AG04450 (cell line): ENCODE measurements at regions of chr17 and their contacts with region 1.

Region 1: DNA sequence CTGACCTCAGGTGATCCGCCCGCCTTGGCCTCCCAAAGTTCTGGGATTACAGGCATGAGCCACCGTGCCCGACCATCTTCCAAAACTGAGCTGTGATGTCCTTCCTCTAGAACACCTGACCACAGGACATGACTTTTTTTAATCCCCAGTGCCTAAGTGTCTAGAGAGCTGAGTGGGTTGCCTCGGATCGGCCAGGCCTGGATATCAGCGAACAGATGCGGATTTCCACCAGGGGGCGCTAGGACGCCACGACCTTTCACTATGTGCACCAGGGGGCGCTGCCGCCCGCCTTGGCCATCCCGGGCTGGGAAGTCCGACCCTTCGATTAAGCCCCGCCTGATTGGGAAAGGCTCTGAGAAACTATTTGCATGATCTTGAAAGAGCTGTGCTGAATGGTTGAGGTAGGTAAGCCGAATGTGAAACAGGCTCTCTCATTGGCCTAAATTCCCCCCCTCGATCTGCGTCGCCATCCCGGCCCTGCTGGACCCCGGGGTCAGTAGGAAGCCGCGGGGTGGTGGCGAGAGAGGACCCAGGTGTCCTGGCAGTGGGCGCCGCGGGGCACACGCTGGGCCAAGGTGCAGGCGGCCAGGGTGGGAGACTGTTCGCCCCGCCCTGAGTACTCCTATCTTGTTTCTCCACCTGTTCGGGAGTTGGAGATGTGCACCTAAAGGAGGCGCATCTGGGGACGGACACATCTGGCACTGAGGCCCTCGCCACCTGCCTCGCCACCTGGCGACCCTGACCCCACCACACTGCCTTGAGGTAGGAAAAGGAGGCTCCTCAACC is at the start of gene ACBD4:
- DNase-seq: peak; percentile 95
- H3K4me3 ChIP-seq: peak within 1 kb of the TSS; percentile 76
- H3K27ac ChIP-seq: peak within 1 kb of the TSS; percentile 31
- H3K27me3 ChIP-seq: no peaks in the 10 kb centered on the region
- CTCF ChIP-seq: peak; percentile 100
- polyA plus RNA-seq, gene ACBD4: 4.0 and 4.7 TPM in 2 replicates

Region 2: DNA sequence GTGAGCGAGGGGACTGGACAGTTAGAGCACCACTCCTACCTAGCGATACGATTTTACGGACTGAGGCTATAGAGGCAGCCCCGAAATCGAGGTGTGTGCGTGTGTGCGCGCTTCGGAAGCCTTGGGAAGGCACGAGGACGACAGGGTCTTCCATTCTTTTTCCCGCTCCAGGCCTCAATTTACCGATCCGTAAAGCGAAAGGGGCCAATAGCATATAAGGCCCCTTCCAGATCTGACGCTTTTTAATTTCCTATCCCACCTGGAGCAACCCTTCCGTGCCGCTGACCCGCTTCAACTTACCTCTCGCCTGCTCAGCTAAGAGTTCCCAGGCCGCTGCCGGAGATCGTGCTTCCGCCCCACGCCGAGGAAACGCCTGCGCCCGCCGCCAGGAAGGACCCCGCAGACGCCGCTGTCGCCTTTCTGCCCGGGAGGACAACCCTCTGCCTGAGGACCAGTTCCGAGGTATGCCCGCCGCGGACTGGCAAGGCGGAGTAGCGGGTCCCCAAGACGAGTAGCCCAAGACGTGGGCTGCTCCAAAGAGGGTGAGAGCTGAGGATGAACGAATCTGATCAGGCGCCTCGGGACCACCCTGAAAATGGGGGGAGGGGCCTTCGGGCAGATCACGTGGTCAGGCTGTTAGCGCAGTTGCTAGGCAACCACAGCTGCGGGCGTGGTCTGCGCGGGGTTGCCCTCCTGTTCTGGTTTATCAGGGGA is 236.2 kb before region 1 on chr17 and contains the start of gene EFTUD2:
- CTCF ChIA-PET with region 1: interaction called, 19 read pairs
- POLR2A ChIA-PET with region 1: no interaction called
- DNase-seq: peak; percentile 74
- H3K4me3 ChIP-seq: peak within 1 kb of the TSS; percentile 98
- H3K27ac ChIP-seq: peak within 1 kb of the TSS; percentile 94
- H3K27me3 ChIP-seq: no peaks in the 10 kb centered on the region
- CTCF ChIP-seq: no peak
- polyA plus RNA-seq, gene EFTUD2: 123 and 147 TPM in 2 replicates

Region 3: DNA sequence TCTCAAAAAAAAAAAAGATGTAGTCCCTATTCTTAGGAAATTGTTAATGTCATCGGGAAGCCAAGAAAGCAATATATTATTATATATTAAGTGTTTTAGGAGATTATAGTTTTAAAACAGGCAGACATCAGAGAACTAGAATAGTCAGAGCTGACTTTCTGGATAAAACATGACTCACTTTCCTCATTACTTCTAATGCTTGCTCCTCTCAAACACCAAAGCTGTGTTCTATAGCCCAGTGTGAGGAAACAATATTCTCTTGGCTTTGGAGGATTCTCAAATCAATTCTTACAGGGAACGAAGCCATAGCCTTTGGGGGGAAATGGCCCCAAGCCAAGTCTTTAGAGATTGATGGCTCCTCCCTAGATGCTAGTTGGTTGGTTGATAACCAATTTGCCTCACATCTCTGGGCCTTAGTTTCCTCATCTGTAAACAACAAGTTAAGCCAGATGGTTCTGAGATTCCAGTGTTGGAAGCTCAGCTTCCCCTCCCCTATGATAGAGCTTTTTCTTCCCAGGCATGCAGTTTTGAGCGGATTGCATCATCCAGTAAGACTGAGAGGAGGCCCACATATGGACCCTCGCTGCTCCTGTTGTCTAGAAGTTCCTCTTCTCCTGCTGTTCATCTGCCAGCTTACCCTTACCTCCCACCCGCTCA is 61.8 kb before region 1 on chr17:
- CTCF ChIA-PET with region 1: interaction called, 29 read pairs
- POLR2A ChIA-PET with region 1: no interaction called
- DNase-seq: peak; percentile 93
- H3K4me3 ChIP-seq: no peak overlapping the region
- H3K27ac ChIP-seq: peak overlapping the region; percentile 92
- H3K27me3 ChIP-seq: no peaks in the 10 kb centered on the region
- CTCF ChIP-seq: no peak

Region 4: GRCh38 chr17:45115871-45116724 is 19.3 kb before region 1 on chr17:
- CTCF ChIA-PET with region 1: interaction called, 52 read pairs
- POLR2A ChIA-PET with region 1: no interaction called
- DNase-seq: no peak
- H3K4me3 ChIP-seq: no peak overlapping the region
- H3K27ac ChIP-seq: no peak overlapping the region
- H3K27me3 ChIP-seq: no peaks in the 10 kb centered on the region
- CTCF ChIP-seq: no peak

Region 5: GRCh38 chr17:45172454-45173286 is 37.3 kb after region 1 on chr17:
- CTCF ChIA-PET with region 1: interaction called, 42 read pairs
- POLR2A ChIA-PET with region 1: interaction called, 4 read pairs
- DNase-seq: no peak
- H3K4me3 ChIP-seq: 0 out of 2 replicates have a peak overlapping the region, but pooled peaks have one; percentile 10
- H3K27ac ChIP-seq: peak overlapping the region; percentile 75
- H3K27me3 ChIP-seq: no peaks in the 10 kb centered on the region
- CTCF ChIP-seq: no peak

Region 6: GRCh38 chr17:45228763-45229539 is 93.6 kb after region 1 on chr17:
- CTCF ChIA-PET with region 1: interaction called, 31 read pairs
- POLR2A ChIA-PET with region 1: no interaction called
- DNase-seq: peak; percentile 86
- H3K4me3 ChIP-seq: peak overlapping the region; percentile 22
- H3K27ac ChIP-seq: peak overlapping the region; percentile 89
- H3K27me3 ChIP-seq: peaks cover 3% of the 10 kb centered on the region
- CTCF ChIP-seq: no peak

Region 7: DNA sequence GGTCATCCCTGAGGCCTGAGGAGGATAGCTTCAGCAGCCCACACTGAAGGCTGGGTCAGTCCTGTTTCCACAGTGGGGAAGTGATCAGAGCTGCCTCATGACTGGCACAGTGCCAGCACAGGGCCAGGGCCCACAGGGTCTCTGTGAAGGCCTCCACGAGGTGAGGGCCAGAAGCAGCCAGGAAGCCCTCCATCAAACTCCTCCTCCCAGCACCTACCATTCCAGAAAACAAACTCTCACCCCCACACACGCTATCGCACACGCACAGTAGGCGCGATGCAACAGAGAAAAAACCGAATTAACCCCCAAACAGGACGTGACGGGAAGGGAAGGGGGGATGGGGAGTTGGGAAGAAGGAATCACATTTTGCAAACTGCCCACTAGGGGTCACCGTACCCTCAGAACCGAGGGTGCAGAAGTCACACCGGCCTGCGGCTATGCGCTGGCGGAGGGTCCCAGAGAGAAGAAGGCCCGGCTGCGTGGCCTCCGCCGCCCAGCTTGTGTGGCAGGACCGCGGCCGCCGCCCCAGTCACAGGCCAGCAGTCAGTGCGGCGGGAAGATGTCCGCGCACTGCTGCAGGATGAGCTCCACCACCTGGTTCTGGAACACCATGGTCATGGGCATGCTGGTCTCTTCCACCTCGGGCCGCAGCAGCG is 259.7 kb after region 1 on chr17:
- CTCF ChIA-PET with region 1: interaction called, 13 read pairs
- POLR2A ChIA-PET with region 1: no interaction called
- DNase-seq: peak; percentile 81
- H3K4me3 ChIP-seq: peak overlapping the region; percentile 50
- H3K27ac ChIP-seq: no peak overlapping the region
- H3K27me3 ChIP-seq: peaks cover 5% of the 10 kb centered on the region
- CTCF ChIP-seq: peak; percentile 79